Tibial artery (tissue), 4 donors: ENCODE measurements at regions of chr19 and their contacts with region 1.

Region 1: DNA sequence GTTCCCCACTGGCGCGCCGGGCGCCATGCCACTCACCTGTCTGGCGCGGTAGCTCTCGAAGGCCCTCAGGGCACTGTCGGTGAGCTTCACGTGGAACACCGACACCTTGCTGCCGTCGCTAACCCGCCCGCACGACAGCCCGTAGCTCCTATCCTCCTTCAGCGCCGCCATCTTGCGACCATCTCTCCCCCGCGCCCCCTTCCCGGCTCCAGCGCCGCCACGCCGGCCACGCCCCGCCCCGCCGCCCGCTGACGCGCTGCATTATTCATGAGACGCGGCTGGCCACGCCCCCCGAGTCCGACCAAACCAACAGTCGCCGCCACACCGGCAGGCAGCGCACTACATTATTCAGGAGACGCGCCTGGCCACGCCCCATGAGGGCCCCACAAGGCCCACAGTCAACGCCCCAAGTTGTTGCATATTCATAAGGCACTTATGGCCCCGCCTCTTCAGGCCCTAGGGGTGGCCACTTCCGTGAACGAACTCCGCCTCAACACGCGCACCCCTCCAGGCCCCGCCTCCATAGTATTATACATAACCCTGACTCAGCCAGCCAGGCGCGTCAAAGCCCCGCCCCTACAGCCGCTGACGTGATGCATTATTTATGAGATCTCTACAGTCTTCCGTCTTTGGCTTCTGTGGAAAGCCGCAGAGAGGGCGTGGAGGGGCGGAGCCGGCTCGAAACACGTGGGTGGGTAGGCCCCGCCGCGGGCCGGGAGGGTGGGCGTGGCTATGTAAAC is at the start of gene ELL:
- DNase-seq: peak; percentile 100
- H3K4me3 ChIP-seq: peak within 1 kb of the TSS; percentile 94 to 98
- H3K27ac ChIP-seq: peak within 1 kb of the TSS; percentile 95 to 99
- H3K4me1 ChIP-seq: peaks cover 0 to 19% (median 9%) of the 10 kb centered on the region in 4 donors
- H3K27me3 ChIP-seq: no peaks in the 10 kb centered on the region
- CTCF ChIP-seq: peak in 1 of 2 experiments; percentile 9

Region 2: DNA sequence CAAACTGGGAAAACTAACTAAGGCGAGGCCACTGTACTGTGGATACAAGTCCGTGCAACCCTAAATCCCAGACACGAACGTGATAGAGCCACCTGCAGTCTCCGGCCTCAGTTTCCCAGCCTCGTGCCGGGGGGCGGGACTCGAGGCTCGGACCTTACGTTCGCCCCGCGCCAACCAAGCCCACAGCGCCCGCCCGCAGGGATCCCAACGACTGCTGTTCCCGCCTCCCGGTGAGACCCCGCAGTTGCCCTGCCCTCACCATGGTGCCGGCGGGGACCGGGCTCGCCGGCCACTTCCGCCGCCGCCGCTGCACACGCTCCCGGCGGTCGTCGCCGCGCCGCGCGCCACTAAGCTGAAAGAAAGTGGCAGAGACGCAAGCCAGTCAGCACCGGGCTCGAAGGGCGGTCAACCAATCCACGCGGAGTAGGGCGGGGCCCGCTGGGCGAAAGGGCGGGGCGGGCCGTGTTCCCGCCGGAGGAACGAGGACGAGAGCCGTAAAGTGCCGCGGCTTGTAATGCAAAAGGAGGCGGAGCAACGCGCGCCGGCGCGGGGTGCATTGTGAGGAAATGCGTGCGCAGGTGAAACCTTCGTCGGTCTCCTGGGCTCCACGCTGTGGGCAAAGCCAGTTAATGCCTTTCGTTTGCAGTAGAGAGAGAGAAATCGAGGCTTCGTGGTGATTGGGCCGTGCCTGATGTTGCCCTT is 199.1 kb before region 1 on chr19 and contains the start of gene LSM4:
- intact Hi-C with region 1: no loop called
- DNase-seq: peak; percentile 98 to 99
- H3K4me3 ChIP-seq: peak within 1 kb of the TSS; percentile 72 to 85
- H3K27ac ChIP-seq: peak within 1 kb of the TSS; percentile 84 to 90
- H3K4me1 ChIP-seq: peaks cover 0 to 39% (median 29%) of the 10 kb centered on the region in 4 donors
- H3K27me3 ChIP-seq: no peaks in the 10 kb centered on the region
- CTCF ChIP-seq: peak in 1 of 2 experiments; percentile 5

Region 3: DNA sequence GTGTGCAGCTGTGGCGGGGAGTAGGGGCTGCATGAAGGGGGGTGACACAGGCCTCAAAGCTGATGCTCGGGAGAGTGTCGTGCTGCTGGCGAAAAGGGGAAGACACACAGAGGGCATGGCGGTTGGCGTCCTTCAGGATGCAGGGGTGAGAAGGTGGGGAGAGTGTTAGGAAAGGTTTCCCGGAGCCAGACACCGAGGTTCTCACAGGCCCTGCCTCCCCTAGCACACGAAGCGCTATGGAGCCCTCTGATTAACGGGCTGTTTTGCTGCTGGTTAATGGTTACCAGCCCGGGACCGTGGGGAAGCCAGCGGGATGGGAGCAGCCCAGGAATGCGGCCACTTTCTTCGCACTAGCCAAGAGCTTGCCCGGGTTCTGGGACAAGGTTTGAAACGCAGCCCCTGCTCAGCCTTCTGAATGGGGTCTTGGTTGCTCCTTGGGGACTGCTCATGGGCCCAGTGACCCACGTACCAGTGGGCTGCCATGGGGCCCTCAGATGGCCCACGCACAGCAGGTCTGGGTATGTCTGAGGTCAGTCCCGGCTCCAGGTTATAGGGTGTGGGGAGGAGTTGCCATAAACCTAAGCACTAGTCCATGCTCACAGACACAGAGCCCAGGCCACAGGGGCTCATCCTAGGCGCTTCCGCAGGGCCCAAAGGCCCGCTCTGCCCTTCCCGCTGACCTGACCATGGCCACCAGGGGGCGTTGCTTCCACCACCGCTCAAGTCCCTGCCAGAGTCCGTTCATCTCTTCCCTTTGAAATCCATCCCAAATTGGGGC is 52.8 kb before region 1 on chr19:
- intact Hi-C with region 1: loop called (anchors 5 kb)
- DNase-seq: no peak
- H3K4me3 ChIP-seq: no peak overlapping the region
- H3K27ac ChIP-seq: peak overlapping the region; percentile 20
- H3K4me1 ChIP-seq: peaks cover 17 to 73% (median 57%) of the 10 kb centered on the region in 4 donors
- H3K27me3 ChIP-seq: no peaks in the 10 kb centered on the region
- CTCF ChIP-seq: peak; percentile 70 to 71

Region 4: GRCh38 chr19:18571564-18572300 is 49.7 kb after region 1 on chr19 and contains the start of gene UBA52:
- intact Hi-C with region 1: no loop called
- DNase-seq: peak; percentile 98 to 99
- H3K4me3 ChIP-seq: peak within 1 kb of the TSS; percentile 80 to 91
- H3K27ac ChIP-seq: peak within 1 kb of the TSS; percentile 86 to 91
- H3K4me1 ChIP-seq: peaks cover 0 to 22% (median 13%) of the 10 kb centered on the region in 4 donors
- H3K27me3 ChIP-seq: no peaks in the 10 kb centered on the region
- CTCF ChIP-seq: no peak

Region 5: GRCh38 chr19:18649371-18650020 is 127.4 kb after region 1 on chr19:
- intact Hi-C with region 1: no loop called
- DNase-seq: peak; percentile 86 to 92
- H3K4me3 ChIP-seq: peak overlapping the region; percentile 39 to 42
- H3K27ac ChIP-seq: peak overlapping the region; percentile 96 to 99
- H3K4me1 ChIP-seq: peaks cover 13 to 83% (median 78%) of the 10 kb centered on the region in 4 donors
- H3K27me3 ChIP-seq: no peaks in the 10 kb centered on the region
- CTCF ChIP-seq: no peak